Posterior vena cava (tissue), 2 donors: ENCODE measurements at regions of chr2 and their contacts with region 1.

Region 1: DNA sequence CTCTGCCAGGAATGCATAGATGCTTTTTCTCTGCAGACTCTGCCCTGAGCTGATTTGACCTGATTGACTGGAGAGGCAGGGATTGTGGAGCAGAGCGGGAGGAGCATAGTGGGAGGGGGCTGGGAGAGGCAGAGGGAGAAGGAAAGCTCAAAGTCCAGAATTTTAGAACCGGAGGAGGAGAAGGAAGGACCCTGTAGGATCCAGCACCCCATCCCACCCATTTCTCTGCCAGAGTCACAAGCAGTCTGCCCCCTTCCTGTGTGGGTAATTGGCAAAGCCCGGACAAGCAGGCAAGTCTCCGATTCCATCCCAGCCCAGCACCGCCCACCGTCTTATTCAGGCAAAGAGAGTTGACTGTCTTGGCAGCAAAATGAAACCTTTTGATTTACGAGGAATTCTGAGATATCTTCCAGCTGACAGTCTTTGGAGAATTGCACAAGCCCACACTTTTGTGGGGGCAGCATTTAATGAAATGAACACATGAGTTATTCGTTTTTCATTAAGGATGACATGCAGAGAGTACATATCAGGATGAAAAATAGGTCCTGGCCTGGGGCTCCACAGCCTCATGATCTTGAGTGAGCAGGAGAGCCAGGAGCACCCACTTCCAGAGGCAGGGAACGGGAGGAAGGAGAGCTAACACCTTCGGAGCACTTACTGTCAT is 103.1 kb downstream of the MCFD2 start:
- DNase-seq: peak; percentile 92

Region 2: GRCh38 chr2:45882707-45883602 is 929.5 kb before region 1 on chr2:
- intact Hi-C with region 1: no loop called
- DNase-seq: no peak

Region 3: DNA sequence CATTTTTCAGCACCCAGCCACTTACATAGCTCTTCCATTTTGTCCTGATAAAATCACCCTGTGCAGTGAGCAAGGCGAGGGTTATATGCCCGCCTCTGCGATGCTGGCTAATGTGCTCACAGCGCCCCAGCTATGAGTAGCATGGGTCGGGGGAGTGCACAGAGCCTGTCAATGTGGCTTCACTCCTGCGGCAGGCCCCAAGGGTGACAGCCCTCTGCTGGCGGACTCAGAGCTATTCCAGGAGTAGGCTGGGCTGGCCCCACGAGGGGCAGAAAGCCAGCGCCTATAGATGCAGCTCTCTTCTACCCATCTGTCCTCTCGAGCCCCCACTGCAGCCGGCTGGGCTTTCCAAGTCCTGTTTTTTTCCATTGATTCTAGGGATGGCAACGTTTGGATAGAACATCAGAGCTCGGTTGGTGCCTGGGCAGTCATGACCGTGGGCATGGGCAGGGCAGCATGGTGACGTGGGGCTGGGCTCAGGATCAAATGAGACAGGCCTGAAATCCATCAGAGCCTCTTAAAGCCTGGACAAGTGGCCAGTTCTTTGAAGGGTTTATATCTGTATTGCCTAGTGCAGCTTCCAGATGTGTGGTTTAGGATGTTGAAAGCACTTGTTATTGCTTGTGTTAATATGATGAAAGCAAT is 31.6 kb before region 1 on chr2:
- intact Hi-C with region 1: loop called in 1 of 2 experiments (anchors 2 kb)
- DNase-seq: no peak

Region 4: DNA sequence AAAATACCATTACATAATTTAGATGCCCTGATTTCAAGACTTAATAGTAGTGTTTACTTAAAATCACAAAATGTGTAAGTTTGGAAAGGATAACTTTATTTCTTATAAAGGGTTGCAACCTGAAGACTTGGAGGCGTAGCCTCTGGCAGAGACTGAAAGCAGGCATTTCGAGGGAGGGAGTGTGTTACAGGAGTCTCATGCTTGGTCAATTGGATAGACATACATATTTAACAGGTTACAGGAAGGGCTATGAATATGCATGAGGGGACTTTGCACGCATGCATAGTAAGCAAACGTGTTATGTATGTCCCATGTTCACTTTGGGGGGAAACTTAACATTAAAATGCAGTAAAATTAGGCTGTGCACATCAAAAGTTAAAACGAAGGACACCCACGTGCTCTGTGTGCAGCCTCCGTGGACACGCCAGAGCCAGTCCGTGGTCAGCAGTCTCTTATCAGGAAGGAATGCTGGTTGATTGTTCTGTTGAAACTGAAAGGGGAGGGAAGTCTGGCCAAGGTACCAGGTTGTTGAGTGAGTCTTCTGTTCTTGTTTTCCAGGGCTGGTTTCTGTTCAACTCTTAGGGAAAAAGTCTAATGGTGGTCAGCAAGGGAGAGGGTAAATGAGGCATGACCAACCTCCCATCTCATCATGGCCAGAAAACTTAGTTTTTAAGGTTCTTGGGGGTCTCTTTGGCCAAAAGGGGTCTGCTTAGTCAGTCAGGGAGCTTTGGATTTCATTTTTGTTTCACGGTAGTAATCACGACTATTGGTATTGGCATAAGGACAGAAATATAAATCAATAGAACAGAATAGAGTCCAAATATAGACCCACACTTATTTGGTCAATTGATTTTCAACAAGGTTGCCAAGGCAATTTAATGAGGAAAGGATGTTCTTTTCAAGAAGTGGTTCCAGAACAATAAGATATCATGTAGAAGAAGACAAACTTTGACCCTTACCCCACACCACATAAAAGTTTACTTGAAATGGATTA is 18.8 kb before region 1 on chr2:
- intact Hi-C with region 1: loop called in 1 of 2 experiments (anchors 1 kb)
- DNase-seq: peak; percentile 12

Region 5: GRCh38 chr2:46847235-46848068 is 35.0 kb after region 1 on chr2:
- intact Hi-C with region 1: loop called in 1 of 2 experiments (anchors 5 kb)
- DNase-seq: peak; percentile 92

Region 6: GRCh38 chr2:46876741-46877384 is 64.4 kb after region 1 on chr2:
- intact Hi-C with region 1: loop called (anchors 5 to 10 kb)
- DNase-seq: no peak